ENCODE measurements at regions of chr2 and their contacts with region 1.

Region 1: GRCh38 chr2:72803151-72803550 is 22.7 kb downstream of the EXOC6B start:
- DNase-seq: peak; percentile 70
- H3K4me3 ChIP-seq: no peak overlapping the region
- H3K27ac ChIP-seq: peak overlapping the region; percentile 20
- H3K4me1 ChIP-seq: peaks cover 6% of the 10 kb centered on the region
- H3K27me3 ChIP-seq: no peaks in the 10 kb centered on the region
- CTCF ChIP-seq: no peak

Region 2: DNA sequence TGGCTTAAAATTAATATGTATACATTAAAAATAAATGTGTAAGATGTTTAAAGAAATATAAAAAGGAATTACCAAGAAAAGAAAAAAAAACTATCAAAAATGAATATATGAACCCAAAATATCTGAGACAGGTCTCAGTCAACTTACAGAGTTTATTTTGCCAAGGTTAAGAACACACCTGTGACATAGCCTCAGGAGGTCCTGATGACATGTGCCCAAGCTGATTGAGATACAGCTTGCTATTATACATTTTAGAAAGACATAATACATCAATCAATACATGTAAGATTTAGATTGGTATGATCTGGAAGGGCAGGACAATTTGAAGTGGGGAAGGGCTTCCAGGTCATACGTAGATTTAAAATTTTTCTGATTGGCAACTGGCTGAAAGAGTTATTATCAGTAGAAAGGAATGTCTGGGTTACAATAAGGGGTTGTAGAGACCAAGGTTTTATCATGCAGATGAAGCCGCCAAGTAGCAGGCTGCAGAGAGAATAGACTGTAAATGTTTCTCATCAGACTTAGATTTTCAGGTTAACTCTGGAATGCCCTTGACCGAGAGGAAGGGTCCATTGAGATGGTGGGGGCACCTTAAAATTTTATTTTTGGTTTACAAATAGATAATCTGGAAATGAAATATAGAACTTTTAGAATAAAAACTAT is 52.0 kb before region 1 on chr2:
- CTCF ChIA-PET with region 1: no interaction called
- dilution Hi-C with region 1: loop called (anchors 5 kb)
- in situ Hi-C with region 1: no loop called
- intact Hi-C with region 1: no loop called
- DNase-seq: no peak
- H3K4me3 ChIP-seq: no peak overlapping the region
- H3K27ac ChIP-seq: no peak overlapping the region
- H3K4me1 ChIP-seq: peaks cover 10% of the 10 kb centered on the region
- H3K27me3 ChIP-seq: no peaks in the 10 kb centered on the region
- CTCF ChIP-seq: no peak

Region 3: DNA sequence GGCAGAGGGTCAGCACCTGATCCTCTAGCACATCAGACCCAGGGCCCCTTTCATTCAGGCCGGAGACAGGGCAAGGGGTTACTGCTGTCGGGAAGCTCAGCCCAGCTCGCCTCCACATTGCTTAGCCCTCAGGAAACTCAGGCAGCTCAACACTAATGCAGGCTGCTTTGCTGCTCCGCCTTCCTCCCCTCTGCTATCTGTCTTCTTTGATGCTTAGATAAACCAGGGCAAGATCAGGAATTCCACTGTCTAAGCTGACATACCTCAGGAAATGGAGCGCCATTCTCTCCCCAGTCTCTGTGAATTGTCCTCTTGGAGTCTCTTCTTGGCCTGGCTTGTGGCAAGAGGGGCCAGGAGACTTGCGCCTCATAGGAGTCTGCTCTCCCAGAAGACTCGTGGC is 48.2 kb after region 1 on chr2:
- CTCF ChIA-PET with region 1: no interaction called
- dilution Hi-C with region 1: loop called (anchors 5 kb)
- in situ Hi-C with region 1: no loop called
- intact Hi-C with region 1: no loop called
- DNase-seq: no peak
- H3K4me3 ChIP-seq: no peak overlapping the region
- H3K27ac ChIP-seq: no peak overlapping the region
- H3K4me1 ChIP-seq: no peaks in the 10 kb centered on the region
- H3K27me3 ChIP-seq: no peaks in the 10 kb centered on the region
- CTCF ChIP-seq: no peak